ENCODE measurements at regions of chr19 and their contacts with region 1.

Region 1: GRCh38 chr19:16659831-16660708 is at the start of gene SMIM7:
- DNase-seq: peak; percentile 98
- H3K4me3 ChIP-seq: peak within 1 kb of the TSS; percentile 90 to 95 (median 91)
- H3K27ac ChIP-seq: peak within 1 kb of the TSS; percentile 95
- H3K4me1 ChIP-seq: peaks cover 0 to 5% (median 3%) of the 10 kb centered on the region in 4 experiments; a peak in 4 of 7 replicates
- H3K27me3 ChIP-seq: no peaks in the 10 kb centered on the region
- CTCF ChIP-seq: no peak
- EP300 ChIP-seq: no peak
- POLR2A ChIP-seq: peak; percentile 67 to 95
- RAD21 ChIP-seq: no peak
- total RNA-seq, gene SMIM7: 67.5 and 69.9 TPM in 2 replicates

Region 2: DNA sequence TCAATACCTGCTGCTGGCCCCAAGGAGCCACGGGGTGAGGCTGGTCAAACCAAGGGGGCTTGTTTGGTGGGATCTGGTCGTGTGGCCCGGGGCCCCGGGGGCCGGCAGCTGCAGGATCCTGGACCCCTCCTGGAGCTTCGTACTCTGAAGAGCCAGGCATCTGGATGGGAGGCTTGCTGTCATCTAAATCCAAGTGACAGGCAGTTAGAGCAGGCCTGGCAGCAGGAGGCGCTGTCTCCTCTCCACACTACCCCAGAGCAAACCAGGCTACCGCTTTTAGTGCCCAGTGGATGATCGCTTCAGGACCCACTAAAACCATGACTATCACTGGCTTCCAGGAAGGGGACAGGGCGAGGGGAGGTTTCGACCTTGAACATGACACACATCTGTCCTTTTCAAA is 132.0 kb before region 1 on chr19:
- CTCF ChIA-PET with region 1: no interaction called
- POLR2A ChIA-PET with region 1: no interaction called
- DNase-seq: peak in 1 of 2 experiments; percentile 70
- H3K4me3 ChIP-seq: no peak overlapping the region
- H3K27ac ChIP-seq: no peak overlapping the region
- H3K4me1 ChIP-seq: no peaks in the 10 kb centered on the region
- H3K27me3 ChIP-seq: no peaks in the 10 kb centered on the region
- CTCF ChIP-seq: peak; percentile 52 to 81 (median 80)
- EP300 ChIP-seq: no peak
- POLR2A ChIP-seq: no peak
- RAD21 ChIP-seq: peak; percentile 40 to 64

Region 3: DNA sequence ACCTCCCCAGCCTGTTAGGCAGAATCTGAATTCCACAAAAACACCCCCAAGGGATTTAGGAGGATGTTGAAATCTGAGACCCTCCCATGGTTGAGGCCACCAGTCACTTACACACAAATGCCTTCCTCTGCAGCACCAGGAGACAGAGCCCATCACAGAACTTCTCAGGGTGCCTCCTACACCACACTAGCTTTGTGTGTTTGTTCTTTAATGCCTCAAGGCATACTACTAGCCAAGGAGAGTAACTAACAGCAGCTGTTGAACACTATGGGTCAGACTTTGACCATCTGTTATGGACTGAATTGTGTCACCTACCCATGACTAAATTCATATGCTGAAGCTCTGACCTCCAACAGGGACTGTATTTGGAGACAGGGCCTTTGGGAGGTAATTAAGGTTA is 22.5 kb before region 1 on chr19:
- CTCF ChIA-PET with region 1: interaction called, 3 read pairs
- POLR2A ChIA-PET with region 1: interaction called, 18 read pairs
- DNase-seq: no peak
- H3K4me3 ChIP-seq: no peak overlapping the region
- H3K27ac ChIP-seq: no peak overlapping the region
- H3K4me1 ChIP-seq: no peaks in the 10 kb centered on the region
- H3K27me3 ChIP-seq: no peaks in the 10 kb centered on the region
- CTCF ChIP-seq: no peak
- EP300 ChIP-seq: no peak
- POLR2A ChIP-seq: no peak
- RAD21 ChIP-seq: no peak

Region 4: GRCh38 chr19:16671652-16672274 is 11.7 kb after region 1 on chr19:
- CTCF ChIA-PET with region 1: interaction called, 3 read pairs
- POLR2A ChIA-PET with region 1: interaction called, 19 read pairs
- DNase-seq: no peak
- H3K4me3 ChIP-seq: no peak overlapping the region
- H3K27ac ChIP-seq: no peak overlapping the region
- H3K4me1 ChIP-seq: no peaks in the 10 kb centered on the region
- H3K27me3 ChIP-seq: no peaks in the 10 kb centered on the region; a peak in 1 of 7 replicates
- CTCF ChIP-seq: no peak
- EP300 ChIP-seq: no peak
- POLR2A ChIP-seq: no peak
- RAD21 ChIP-seq: no peak